OCI-LY7 (cell line): ENCODE measurements at regions of chr3 and their contacts with region 1.

Region 1: DNA sequence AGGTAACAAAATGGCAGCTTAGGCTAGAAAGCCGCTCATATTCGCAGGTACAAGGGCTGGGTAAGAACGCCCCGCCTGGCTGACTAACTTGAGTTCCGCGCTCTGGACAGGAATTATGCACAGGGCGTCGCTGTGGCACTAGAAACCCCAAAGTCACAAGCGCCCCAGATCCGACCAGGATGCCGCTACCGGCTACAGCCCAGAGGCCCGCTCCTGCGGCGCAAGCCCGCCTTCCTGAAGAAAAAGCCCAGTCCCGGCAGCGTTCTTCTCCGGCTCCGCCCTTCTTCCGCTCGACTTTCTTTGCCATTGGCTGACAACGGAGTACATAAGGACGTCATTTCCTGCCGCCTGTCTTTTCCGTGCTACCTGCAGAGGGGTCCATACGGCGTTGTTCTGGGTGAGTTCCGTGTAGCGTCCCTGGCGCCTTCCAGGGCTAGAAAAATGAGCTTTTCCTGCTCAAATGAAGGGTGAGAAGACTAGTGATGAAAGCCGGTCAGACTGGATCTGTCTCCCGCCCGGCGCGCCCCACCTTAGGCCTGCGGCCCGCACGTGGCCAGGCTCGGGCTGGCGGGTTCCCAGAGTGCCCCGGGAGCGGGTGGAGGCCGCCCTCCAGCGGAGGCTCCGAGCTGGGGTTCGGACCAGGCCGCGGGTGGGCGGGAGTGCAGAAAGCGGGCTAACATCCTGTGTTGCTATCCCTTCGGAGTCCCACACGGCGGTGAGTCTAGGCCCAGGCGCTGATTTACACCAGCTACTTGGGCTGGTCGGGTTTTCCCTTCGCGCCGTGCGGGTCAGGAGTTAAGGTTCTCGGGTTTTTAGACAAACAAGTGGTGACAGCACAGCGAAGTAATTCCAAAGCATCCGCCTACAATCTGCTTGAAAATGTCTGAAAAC is at the start of gene RPSA:
- DNase-seq: peak; percentile 99
- H3K4me3 ChIP-seq: peak within 1 kb of the TSS; percentile 100
- H3K27ac ChIP-seq: peak within 1 kb of the TSS; percentile 78
- H3K4me1 ChIP-seq: peaks cover 45% of the 10 kb centered on the region
- CTCF ChIP-seq: peak; percentile 65
- total RNA-seq, gene RPSA: 2,776 and 2,813 TPM in 2 replicates

Region 2: GRCh38 chr3:39383045-39383880 is 23.4 kb before region 1 on chr3 and contains the start of gene SLC25A38:
- CTCF ChIA-PET with region 1: interaction called, 11 read pairs
- POLR2A ChIA-PET with region 1: interaction called, 85 read pairs
- intact Hi-C with region 1: loop called (anchors 1 kb)
- DNase-seq: peak; percentile 92
- H3K4me3 ChIP-seq: peak within 1 kb of the TSS; percentile 76
- H3K27ac ChIP-seq: peak within 1 kb of the TSS; percentile 73
- H3K4me1 ChIP-seq: peaks cover 42% of the 10 kb centered on the region
- CTCF ChIP-seq: peak; percentile 62
- total RNA-seq, gene SLC25A38: 22.8 and 32.6 TPM in 2 replicates

Region 3: DNA sequence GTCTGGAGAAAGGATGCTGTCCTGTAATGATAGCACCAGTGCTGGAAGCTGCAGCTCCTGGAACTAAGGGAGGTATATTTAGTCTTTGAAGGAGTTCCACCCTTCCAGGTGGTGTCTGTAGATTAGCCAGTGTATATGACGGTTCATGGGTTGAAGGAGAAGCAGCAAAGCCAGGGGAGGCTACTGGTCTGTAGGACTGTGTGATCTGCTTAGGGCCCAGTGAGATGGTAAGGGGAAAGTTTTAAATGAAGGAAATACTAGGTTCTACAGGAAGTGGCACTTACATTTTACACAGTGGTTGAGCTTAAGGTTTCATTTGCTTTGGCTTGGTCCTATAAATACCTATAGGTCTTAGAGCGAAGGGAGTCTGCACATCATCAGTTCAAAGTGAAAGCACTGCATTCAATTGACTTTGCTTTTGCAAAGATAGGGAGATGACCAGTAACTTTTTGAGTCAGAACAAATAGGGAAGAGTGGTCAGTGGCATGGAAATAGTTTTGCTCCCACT is 17.8 kb before region 1 on chr3:
- CTCF ChIA-PET with region 1: interaction called, 11 read pairs
- POLR2A ChIA-PET with region 1: interaction called, 85 read pairs
- intact Hi-C with region 1: loop called (anchors 1 kb)
- DNase-seq: peak; percentile 83
- H3K4me3 ChIP-seq: peak overlapping the region; percentile 59
- H3K27ac ChIP-seq: peak overlapping the region; percentile 85
- H3K4me1 ChIP-seq: peaks cover 58% of the 10 kb centered on the region
- CTCF ChIP-seq: no peak

Region 4: GRCh38 chr3:39428745-39429201 is 22.2 kb after region 1 on chr3:
- CTCF ChIA-PET with region 1: no interaction called
- POLR2A ChIA-PET with region 1: interaction called, 10 read pairs
- intact Hi-C with region 1: no loop called
- DNase-seq: no peak
- H3K4me3 ChIP-seq: no peak overlapping the region
- H3K27ac ChIP-seq: no peak overlapping the region
- H3K4me1 ChIP-seq: no peaks in the 10 kb centered on the region
- CTCF ChIP-seq: no peak

Region 5: DNA sequence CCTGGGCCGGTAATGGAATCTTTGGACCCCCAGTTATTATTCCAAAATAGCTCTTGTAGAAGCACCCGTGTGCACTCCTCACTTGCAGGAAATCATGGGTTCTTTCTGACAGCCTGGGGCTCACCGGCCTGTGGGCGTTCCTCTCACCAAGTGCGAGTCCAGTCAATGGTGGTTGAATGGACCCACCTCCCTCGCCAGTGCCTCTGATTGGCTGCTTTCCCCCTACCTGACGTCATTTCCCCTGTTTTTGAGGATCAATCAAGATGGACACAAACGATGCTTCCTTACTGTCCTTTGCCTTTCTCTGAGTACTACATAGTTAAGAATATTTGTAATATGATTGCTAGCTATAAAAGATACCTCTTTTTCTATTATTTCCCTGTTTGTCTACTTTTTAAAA is 78.9 kb after region 1 on chr3:
- CTCF ChIA-PET with region 1: no interaction called
- POLR2A ChIA-PET with region 1: no interaction called
- intact Hi-C with region 1: no loop called
- DNase-seq: no peak
- H3K4me3 ChIP-seq: no peak overlapping the region
- H3K27ac ChIP-seq: no peak overlapping the region
- H3K4me1 ChIP-seq: no peaks in the 10 kb centered on the region
- CTCF ChIP-seq: no peak

Region 6: DNA sequence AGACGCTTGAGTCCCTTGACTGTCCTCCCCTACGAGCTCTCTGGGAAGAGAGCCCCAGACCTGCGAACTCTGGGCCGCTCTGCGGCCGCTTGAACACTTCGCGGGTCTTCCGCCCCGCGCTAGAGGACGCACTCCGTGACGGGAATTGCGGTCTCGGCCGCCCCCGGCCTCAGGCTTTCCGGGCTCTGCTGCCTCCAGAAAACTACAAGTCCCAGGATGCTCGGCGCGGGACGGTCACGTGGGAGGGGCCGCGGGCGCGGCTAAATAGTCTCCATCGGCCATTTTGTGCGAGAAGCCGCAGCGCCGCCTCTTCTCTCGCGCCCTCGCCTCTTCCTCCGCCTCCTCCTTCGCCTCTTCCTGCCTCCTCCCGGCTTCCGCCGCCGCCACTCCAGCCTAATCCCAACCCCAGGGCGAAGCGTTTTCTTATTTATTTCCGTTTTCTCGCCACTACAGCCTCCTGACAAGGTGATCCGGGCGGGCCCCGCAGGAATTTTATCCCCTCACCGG is 902.9 kb after region 1 on chr3 and contains the start of gene EIF1B:
- CTCF ChIA-PET with region 1: no interaction called
- POLR2A ChIA-PET with region 1: interaction called, 3 read pairs
- intact Hi-C with region 1: loop called (anchors 5 kb)
- DNase-seq: peak; percentile 97
- H3K4me3 ChIP-seq: peak within 1 kb of the TSS; percentile 76
- H3K27ac ChIP-seq: peak within 1 kb of the TSS; percentile 50
- H3K4me1 ChIP-seq: peaks cover 36% of the 10 kb centered on the region
- CTCF ChIP-seq: peak; percentile 86
- total RNA-seq, gene EIF1B: 14.0 and 14.5 TPM in 2 replicates